Vagina (tissue), 2 donors: ENCODE measurements at regions of chr17 and their contacts with region 1.

Region 1: DNA sequence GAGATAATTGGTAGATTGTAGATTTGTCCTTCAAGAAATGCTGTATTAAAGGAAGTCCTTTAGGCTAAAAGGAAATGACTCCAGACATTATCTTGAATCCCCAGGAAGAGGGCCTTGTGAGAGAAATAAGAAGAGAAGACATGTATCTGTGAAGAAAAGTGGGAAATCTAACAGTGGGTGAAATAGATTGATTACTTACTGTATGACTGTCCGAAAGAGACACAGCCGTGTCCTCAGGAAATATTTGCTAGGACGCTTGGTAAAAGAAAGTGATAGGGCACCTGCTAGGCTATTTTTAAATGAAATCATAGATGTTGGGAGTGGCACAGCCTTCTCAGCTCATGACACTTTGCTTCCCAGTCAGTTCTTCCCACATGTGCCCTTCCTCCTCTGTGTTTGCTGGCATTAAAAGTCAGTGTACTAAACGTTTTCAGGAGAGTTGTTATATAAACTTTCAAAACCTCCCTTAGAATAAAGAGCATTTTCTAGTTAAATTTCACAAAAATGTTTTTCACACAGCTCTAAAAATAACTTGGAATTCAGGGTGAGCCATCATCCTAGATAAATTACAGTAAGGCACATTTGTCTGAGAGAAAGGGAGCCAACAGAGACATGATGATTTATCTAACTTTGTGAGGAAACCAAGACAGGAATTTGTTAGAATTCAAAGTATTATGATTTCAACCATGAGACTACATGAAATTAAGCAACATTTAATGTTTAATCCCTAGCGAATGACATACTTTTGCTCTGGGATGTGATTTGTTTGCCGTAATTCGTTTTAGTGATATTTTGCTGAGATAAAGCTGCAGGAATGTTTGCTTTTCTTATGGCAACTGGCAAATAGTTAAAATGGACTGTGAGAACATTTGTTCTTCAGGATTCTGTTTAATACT is 35.0 kb downstream of the DHRS7B start:
- DNase-seq: no peak
- H3K4me3 ChIP-seq: no peak overlapping the region
- H3K27ac ChIP-seq: peak overlapping the region; percentile 33
- H3K4me1 ChIP-seq: peaks cover 26% of the 10 kb centered on the region
- H3K27me3 ChIP-seq: no peaks in the 10 kb centered on the region
- CTCF ChIP-seq: no peak
- POLR2A ChIP-seq: no peak

Region 2: GRCh38 chr17:19958023-19958422 is 1203.7 kb before region 1 on chr17:
- intact Hi-C with region 1: loop called (anchors 5 kb)
- DNase-seq: no peak
- H3K4me3 ChIP-seq: no peak overlapping the region
- H3K27ac ChIP-seq: no peak overlapping the region
- H3K4me1 ChIP-seq: peaks cover 9% of the 10 kb centered on the region
- H3K27me3 ChIP-seq: no peaks in the 10 kb centered on the region
- CTCF ChIP-seq: no peak
- POLR2A ChIP-seq: no peak

Region 3: GRCh38 chr17:21214015-21214776 is 52.5 kb after region 1 on chr17 and contains the start of gene TMEM11:
- intact Hi-C with region 1: loop called (anchors 10 kb)
- DNase-seq: peak in 1 of 2 donors; percentile 95
- H3K4me3 ChIP-seq: peak within 1 kb of the TSS; percentile 77 to 85
- H3K27ac ChIP-seq: peak within 1 kb of the TSS; percentile 85
- H3K4me1 ChIP-seq: peaks cover 57% of the 10 kb centered on the region
- H3K27me3 ChIP-seq: no peaks in the 10 kb centered on the region
- CTCF ChIP-seq: peak in 2 of 3 experiments; percentile 11 to 26
- POLR2A ChIP-seq: peak in 1 of 2 donors; percentile 23
- total RNA-seq, gene TMEM11: 30.2 TPM

Region 4: DNA sequence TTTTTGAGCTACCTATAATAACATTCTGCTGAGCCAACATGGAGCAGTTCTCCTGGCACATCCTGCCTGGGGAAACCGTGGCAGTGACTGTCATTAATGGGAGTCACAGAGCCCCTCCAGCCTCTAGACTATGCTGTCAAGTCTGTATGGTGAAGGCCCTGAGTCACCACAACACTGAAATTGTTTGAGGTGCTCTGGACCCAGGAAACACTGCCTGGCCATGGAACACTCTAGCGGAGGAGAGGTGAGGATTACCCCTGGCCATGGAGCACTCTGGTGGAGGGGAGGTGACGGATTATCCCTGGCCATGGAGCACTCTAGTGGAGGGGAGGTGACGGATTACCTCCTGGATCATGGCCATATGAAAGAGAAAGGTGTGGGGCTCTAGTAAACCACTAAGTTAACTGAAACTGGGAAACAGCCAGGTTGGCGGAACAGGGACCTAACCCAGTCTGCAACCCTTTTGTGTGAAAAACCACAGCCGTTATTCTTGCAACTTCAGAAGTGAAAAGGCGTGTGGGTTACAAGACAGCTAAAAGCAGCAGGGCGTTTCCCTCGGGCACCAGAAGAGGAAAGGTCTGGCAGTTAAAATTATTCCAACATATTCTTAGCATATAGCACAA is 371.1 kb after region 1 on chr17:
- intact Hi-C with region 1: no loop called
- DNase-seq: no peak
- H3K4me3 ChIP-seq: no peak overlapping the region
- H3K27ac ChIP-seq: no peak overlapping the region
- H3K4me1 ChIP-seq: peaks cover 5% of the 10 kb centered on the region
- H3K27me3 ChIP-seq: no peaks in the 10 kb centered on the region
- CTCF ChIP-seq: no peak
- POLR2A ChIP-seq: no peak